Breast epithelium (tissue), 4 donors: ENCODE measurements at regions of chr10 and their contacts with region 1.

Region 1: GRCh38 chr10:11345224-11346054 is 266.0 kb downstream of the USP6NL start:
- DNase-seq: no peak
- H3K4me3 ChIP-seq: no peak overlapping the region
- H3K27ac ChIP-seq: no peak overlapping the region
- H3K4me1 ChIP-seq: no peaks in the 10 kb centered on the region
- H3K27me3 ChIP-seq: peaks cover 0 to 6% of the 10 kb centered on the region in 2 donors
- CTCF ChIP-seq: no peak
- POLR2A ChIP-seq: no peak

Region 2: DNA sequence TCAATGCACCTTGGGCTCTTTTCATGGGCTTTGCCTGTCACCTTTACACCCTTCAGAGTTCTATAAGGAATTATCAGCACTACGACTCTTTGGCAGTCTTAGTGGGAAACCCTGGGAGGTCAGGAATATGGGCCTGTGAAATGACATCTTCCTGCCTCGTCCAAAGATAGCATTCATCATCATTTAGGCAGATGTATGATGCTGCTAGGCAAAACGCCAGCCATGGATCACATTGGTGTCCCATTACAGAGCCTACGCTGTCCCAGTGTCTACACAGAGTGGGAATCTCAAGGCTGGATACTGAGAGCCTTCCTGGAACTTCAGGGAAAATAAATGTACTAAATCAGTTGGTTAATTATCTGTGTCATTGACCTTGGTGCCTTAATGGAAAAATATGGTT is 587.1 kb before region 1 on chr10:
- intact Hi-C with region 1: no loop called
- DNase-seq: no peak
- H3K4me3 ChIP-seq: no peak overlapping the region
- H3K27ac ChIP-seq: no peak overlapping the region
- H3K4me1 ChIP-seq: no peaks in the 10 kb centered on the region
- H3K27me3 ChIP-seq: no peaks in the 10 kb centered on the region
- CTCF ChIP-seq: no peak
- POLR2A ChIP-seq: no peak

Region 3: DNA sequence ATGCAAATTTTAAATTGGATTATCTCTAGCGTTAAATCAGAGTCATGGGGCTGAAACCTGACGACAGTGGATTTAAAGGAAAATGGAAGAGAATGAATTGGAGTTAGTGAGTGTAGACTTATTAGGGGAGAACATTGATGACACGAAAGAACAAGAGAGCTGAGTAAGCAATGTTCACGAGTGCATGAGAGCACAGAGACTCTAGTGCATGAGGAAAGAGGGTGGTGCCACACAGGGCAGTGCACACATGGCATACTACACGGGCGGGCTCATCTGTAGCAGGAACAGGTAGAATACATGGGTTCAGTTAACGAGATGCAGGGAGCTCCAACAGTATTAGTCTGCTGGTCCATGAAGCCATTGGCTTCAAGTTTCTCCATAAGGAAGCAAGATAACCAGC is 212.1 kb after region 1 on chr10:
- intact Hi-C with region 1: loop called (anchors 5 kb)
- DNase-seq: no peak
- H3K4me3 ChIP-seq: no peak overlapping the region
- H3K27ac ChIP-seq: no peak overlapping the region
- H3K4me1 ChIP-seq: no peaks in the 10 kb centered on the region
- H3K27me3 ChIP-seq: no peaks in the 10 kb centered on the region
- CTCF ChIP-seq: no peak
- POLR2A ChIP-seq: no peak